MCF 10A (cell line): ENCODE measurements at regions of chr4 and their contacts with region 1.

Region 1: GRCh38 chr4:26583865-26584652 is at the start of gene TBC1D19:
- DNase-seq: peak; percentile 87
- H3K4me3 Mint-ChIP-seq: peak within 1 kb of the TSS; percentile 92
- H3K27ac Mint-ChIP-seq: peak within 1 kb of the TSS; percentile 95
- H3K4me1 Mint-ChIP-seq: peaks cover 17% of the 10 kb centered on the region
- H3K27me3 Mint-ChIP-seq: no peaks in the 10 kb centered on the region
- CTCF ChIP-seq: no peak
- total RNA-seq, gene TBC1D19: 9.1 and 9.6 TPM in 2 replicates

Region 2: DNA sequence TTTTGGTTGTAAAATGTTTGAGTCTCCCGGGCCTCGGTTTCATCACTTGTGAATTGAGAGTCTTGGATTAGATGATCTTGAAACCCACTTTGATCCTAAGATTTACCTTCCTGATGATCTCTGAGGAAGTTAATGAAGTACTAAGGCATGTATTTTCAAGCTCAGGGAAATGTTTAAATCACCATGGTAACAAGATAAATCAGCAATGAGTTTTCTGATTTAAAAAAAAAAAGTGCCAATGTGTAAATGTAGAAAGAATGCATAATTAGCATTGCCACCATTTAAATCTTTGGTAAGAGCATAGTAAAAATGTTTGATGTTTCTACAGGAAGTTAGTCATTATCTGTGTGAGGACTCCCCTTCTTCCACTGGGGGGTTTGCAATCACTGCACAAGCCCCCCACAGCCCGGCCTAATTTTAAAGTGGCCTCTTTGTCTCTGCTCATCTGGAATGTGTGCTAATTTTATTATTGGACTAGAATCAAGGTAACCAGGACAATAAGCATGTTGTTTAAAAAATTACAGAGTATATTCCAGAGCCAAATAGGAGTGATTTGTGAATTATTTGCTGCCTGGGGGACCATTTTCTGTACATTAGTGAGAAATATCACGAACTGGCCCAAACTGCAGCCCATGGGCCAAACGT is 834.8 kb before region 1 on chr4:
- CTCF ChIA-PET with region 1: no interaction called
- POLR2A ChIA-PET with region 1: no interaction called
- intact Hi-C with region 1: no loop called
- DNase-seq: no peak
- H3K4me3 Mint-ChIP-seq: no peak overlapping the region
- H3K27ac Mint-ChIP-seq: no peak overlapping the region
- H3K4me1 Mint-ChIP-seq: no peaks in the 10 kb centered on the region
- H3K27me3 Mint-ChIP-seq: no peaks in the 10 kb centered on the region
- CTCF ChIP-seq: no peak

Region 3: DNA sequence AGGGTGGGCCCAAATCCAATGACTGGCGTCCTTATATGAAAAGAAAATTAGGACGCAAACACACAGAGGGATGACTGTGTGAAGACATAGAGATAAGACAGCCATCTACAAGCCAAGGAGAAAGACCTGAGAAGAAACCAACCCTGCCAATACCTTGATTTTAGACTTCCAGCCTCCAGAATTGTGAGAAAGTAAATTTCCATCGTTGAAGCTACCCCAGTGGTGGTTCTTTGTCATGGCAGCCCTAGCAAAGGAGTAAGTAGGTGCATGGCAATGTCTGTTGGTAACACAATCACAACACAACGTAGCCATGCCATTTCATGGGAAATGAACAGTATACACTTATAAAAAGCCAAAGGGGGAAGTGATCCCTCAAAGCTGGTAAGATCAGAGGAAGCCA is 644.7 kb before region 1 on chr4:
- CTCF ChIA-PET with region 1: no interaction called
- POLR2A ChIA-PET with region 1: no interaction called
- intact Hi-C with region 1: no loop called
- DNase-seq: no peak
- H3K4me3 Mint-ChIP-seq: no peak overlapping the region
- H3K27ac Mint-ChIP-seq: no peak overlapping the region
- H3K4me1 Mint-ChIP-seq: no peaks in the 10 kb centered on the region
- H3K27me3 Mint-ChIP-seq: no peaks in the 10 kb centered on the region
- CTCF ChIP-seq: no peak

Region 4: GRCh38 chr4:26496207-26496783 is 87.8 kb before region 1 on chr4:
- CTCF ChIA-PET with region 1: interaction called, 3 read pairs
- POLR2A ChIA-PET with region 1: interaction called, 3 read pairs
- intact Hi-C with region 1: loop called (anchors 1 kb)
- DNase-seq: no peak
- H3K4me3 Mint-ChIP-seq: no peak overlapping the region
- H3K27ac Mint-ChIP-seq: no peak overlapping the region
- H3K4me1 Mint-ChIP-seq: peaks cover 12% of the 10 kb centered on the region
- H3K27me3 Mint-ChIP-seq: peaks cover 27% of the 10 kb centered on the region
- CTCF ChIP-seq: no peak

Region 5: GRCh38 chr4:26568446-26568994 is 15.5 kb before region 1 on chr4:
- CTCF ChIA-PET with region 1: interaction called, 3 read pairs
- POLR2A ChIA-PET with region 1: interaction called, 26 read pairs
- intact Hi-C with region 1: no loop called
- DNase-seq: peak; percentile 49
- H3K4me3 Mint-ChIP-seq: no peak overlapping the region
- H3K27ac Mint-ChIP-seq: peak overlapping the region; percentile 67
- H3K4me1 Mint-ChIP-seq: no peaks in the 10 kb centered on the region
- H3K27me3 Mint-ChIP-seq: no peaks in the 10 kb centered on the region
- CTCF ChIP-seq: no peak

Region 6: DNA sequence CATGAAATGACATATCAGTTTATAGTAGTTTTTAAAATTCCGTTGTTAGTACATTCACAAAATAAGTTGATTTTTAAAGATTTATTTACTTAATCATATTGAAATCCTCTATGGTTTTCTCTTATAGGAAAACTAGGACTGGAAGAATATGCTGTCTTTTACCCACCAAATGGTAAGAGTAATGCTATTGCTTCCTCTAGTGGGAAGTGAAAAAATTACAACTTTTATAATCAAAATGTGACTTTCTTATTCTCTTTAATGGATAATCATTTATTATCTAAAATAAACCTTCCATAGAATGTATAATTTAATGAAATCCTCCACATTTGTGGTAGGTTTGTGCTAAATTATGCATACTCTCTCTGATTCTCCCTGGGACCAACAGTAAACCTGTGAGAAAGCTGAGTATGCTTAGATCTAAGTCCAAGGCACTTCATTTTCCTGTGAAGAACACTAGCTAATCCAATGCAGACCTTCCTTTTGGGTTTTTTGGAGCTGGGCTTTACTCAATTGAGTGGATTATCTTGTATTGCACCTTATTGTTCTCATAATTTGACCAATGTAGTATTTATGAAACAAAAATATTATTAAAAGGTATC is 136.0 kb after region 1 on chr4:
- CTCF ChIA-PET with region 1: interaction called, 3 read pairs
- POLR2A ChIA-PET with region 1: interaction called, 3 read pairs
- intact Hi-C with region 1: loop called (anchors 5 kb)
- DNase-seq: peak; percentile 35
- H3K4me3 Mint-ChIP-seq: no peak overlapping the region
- H3K27ac Mint-ChIP-seq: no peak overlapping the region
- H3K4me1 Mint-ChIP-seq: peaks cover 8% of the 10 kb centered on the region
- H3K27me3 Mint-ChIP-seq: no peaks in the 10 kb centered on the region
- CTCF ChIP-seq: peak; percentile 67

Region 7: DNA sequence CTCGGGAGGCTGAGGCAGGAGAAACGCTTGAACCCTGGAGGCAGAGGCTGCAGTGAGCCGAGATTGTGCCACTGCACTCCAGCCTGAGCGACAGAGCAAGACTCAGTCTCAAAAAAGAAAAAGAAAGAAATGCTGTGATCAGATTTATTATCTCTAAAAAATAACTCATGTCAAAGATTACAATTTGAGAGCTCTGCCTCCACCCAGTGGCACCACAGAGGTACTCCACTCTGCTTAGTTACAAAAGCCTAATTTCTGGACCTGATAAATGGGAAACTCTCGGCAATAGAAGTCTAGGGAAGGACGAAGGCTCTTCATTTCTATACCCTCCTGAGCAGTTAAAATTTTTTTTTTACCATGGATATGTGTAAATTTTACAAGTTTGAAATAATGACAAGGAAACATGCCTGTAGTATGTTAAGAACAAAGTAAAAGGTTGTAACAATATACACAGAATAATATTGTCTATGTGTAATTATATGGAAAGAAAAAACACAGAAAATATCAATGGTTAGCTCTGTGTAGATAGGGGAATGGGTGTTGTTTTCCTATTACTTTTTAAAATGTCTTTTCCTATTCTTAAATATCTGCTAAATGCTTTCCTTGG is 426.4 kb after region 1 on chr4:
- CTCF ChIA-PET with region 1: no interaction called
- POLR2A ChIA-PET with region 1: no interaction called
- intact Hi-C with region 1: loop called (anchors 10 kb)
- DNase-seq: peak; percentile 59
- H3K4me3 Mint-ChIP-seq: no peak overlapping the region
- H3K27ac Mint-ChIP-seq: peak overlapping the region; percentile 39
- H3K4me1 Mint-ChIP-seq: no peaks in the 10 kb centered on the region
- H3K27me3 Mint-ChIP-seq: no peaks in the 10 kb centered on the region
- CTCF ChIP-seq: peak; percentile 71